ENCODE measurements at regions of chr15 and their contacts with region 1.

Region 1: DNA sequence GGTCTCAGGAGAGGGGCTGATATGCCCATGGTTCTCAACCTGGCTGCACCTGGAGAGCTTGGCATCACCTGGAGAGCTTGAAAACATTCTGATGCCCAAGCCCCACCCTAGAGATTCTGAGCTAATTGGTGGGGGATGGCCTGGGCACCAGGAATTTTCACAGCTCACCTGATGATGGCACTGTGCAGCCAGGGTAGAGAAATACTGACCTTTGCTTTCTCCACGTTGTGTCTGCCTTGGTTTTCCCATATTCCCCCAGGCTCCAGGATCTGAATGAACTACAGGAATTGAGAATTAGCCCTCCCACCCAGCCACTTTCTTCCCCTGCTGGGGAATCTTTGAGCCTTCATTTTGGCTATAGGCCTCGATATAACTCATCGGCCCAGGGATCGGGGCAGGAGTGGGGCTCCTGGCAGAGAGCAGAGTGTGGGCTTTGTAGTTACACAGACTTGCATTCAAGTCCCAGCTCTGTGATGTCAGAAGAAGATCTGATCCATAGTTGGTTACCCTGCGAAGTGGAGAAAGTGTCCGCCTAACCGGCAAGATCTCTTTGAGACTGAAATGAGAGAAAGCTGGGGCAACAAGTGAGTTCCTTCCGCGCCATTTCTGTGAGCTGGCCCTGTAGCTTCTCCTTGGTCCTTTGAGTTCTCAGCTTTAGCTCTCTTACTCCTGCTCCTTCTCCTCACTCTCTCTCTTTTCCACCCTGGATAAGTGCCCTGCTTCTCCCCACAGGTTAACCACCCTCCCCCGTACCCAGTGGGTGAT is 33.1 kb upstream of the UBE2Q2 start:
- DNase-seq: peak in 2 of 4 experiments; percentile 50 to 59
- ATAC-seq: peak; percentile 85
- H3K4me3 ChIP-seq: no peak overlapping the region
- H3K27ac ChIP-seq: no peak overlapping the region
- H3K4me1 ChIP-seq: peaks cover 0 to 3% of the 10 kb centered on the region in 2 experiments; a peak in 2 of 5 replicates
- H3K27me3 ChIP-seq: no peaks in the 10 kb centered on the region
- CTCF ChIP-seq: peak; percentile 59 to 78 (median 68)
- EP300 ChIP-seq: no peak
- POLR2A ChIP-seq: no peak
- RAD21 ChIP-seq: peak; percentile 64 to 84

Region 2: DNA sequence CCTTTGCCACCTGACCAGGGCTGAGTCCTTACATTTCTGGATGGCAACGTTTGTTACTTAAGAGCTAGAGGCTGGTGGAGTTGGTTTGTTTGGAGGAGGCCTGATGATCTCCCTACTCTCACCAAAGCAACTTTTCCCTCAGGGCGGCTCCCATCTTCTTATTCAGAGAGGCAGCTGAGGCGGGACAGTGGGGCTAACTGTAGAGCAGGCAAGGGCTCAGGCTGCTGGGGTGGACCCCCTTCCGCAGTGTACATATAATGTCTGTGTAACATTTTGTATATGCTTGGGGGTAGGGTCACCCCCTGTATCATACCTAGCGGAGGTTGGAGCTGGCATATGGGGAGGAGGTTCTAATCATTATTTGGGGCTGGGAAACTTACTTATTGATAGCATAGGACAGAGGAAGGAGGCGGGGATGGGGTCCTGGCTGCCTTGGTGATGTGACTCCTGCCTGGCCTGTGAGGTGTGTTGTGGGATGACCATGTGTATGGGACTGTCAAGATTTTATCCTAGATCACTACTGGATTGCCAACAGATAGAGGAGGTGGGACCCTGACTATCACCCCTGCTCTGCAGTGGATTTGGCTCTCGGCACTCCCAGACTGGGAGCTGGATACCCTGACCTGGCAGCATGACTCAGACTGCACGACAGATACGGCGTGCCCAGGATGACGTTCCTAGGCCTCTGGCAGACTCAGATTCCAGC is 19.4 kb before region 1 on chr15:
- CTCF ChIA-PET with region 1: no interaction called
- POLR2A ChIA-PET with region 1: no interaction called
- in situ Hi-C with region 1: no loop called
- intact Hi-C with region 1: no loop called
- DNase-seq: no peak
- ATAC-seq: no peak
- H3K4me3 ChIP-seq: no peak overlapping the region
- H3K27ac ChIP-seq: no peak overlapping the region
- H3K4me1 ChIP-seq: peaks cover 0 to 12% of the 10 kb centered on the region in 2 experiments; a peak in 2 of 5 replicates
- H3K27me3 ChIP-seq: peaks cover 14 to 38% of the 10 kb centered on the region in 2 experiments
- CTCF ChIP-seq: no peak
- EP300 ChIP-seq: no peak
- POLR2A ChIP-seq: no peak
- RAD21 ChIP-seq: no peak

Region 3: GRCh38 chr15:75903331-75904239 is 93.4 kb after region 1 on chr15 and contains the start of gene FBXO22:
- CTCF ChIA-PET with region 1: no interaction called
- POLR2A ChIA-PET with region 1: interaction called, 3 read pairs
- in situ Hi-C with region 1: no loop called
- intact Hi-C with region 1: loop called (anchors 5 kb)
- DNase-seq: peak; percentile 85 to 96 (median 86)
- ATAC-seq: peak; percentile 95
- H3K4me3 ChIP-seq: peak within 1 kb of the TSS; percentile 89
- H3K27ac ChIP-seq: peak within 1 kb of the TSS; percentile 91
- H3K4me1 ChIP-seq: peaks cover 19 to 32% of the 10 kb centered on the region in 2 experiments
- H3K27me3 ChIP-seq: no peaks in the 10 kb centered on the region
- CTCF ChIP-seq: no peak; a peak in 1 of 6 replicates
- EP300 ChIP-seq: no peak
- POLR2A ChIP-seq: peak; percentile 92
- RAD21 ChIP-seq: no peak
- polyA plus RNA-seq, gene FBXO22: 24.4 to 31.0 TPM

Region 4: DNA sequence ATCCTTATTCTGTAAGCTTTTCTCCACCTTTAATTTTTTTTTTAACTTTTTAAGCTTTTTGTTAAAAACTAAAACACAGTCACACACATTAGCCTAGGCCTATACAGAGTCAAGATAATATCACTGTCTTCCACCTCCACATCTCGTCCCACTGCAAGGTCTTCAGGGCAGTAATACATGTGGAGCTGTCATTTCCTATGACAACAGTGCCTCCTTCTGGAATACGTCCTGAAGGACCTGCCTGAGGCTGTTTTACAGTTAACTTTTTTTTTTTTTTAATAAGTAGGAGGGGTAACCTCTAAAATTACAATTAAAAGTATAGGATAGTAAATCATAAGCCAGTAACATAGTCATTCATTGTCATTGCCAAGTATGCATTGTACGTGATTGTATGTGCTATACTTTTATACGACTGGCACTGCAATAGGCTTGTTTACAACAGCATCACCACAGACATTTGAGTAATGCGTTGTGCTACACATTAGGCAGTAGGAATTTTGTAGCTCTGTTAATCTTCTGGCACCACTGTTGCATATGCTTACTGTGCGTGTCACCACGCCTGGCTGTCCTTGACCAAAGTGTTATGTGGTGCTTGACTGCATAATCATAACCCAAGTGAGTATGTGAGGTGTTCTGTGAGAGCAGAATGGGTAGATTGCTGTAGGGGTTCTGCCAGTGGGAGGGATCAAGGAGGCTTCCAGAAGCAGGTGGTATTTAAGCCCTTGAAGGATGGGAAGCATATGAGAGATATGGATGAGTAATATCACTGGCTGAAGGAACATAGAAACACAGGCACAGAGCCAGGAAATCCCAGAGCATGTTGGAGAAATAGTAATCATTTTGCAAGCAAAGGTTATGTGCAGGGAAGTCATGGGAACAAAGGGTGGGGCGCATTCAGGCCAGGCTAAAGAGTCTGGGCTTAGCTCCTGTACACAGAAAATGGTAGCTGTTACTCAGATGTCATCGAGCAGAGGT is 111.8 kb after region 1 on chr15:
- CTCF ChIA-PET with region 1: interaction called, 15 read pairs
- POLR2A ChIA-PET with region 1: no interaction called
- in situ Hi-C with region 1: loop called (anchors 5 kb)
- intact Hi-C with region 1: loop called (anchors 1 kb)
- DNase-seq: peak in 2 of 4 experiments; percentile 38 to 84
- ATAC-seq: peak; percentile 99
- H3K4me3 ChIP-seq: no peak overlapping the region
- H3K27ac ChIP-seq: no peak overlapping the region
- H3K4me1 ChIP-seq: no peaks in the 10 kb centered on the region
- H3K27me3 ChIP-seq: no peaks in the 10 kb centered on the region
- CTCF ChIP-seq: peak; percentile 71 to 86 (median 72)
- EP300 ChIP-seq: no peak
- POLR2A ChIP-seq: no peak
- RAD21 ChIP-seq: peak; percentile 86 to 94

Region 5: GRCh38 chr15:75928680-75929608 is 118.8 kb after region 1 on chr15:
- CTCF ChIA-PET with region 1: interaction called, 4 read pairs
- POLR2A ChIA-PET with region 1: no interaction called
- in situ Hi-C with region 1: loop called (anchors 5 kb)
- intact Hi-C with region 1: loop called (anchors 1 kb)
- DNase-seq: peak; percentile 28 to 70 (median 38)
- ATAC-seq: peak; percentile 95
- H3K4me3 ChIP-seq: no peak overlapping the region
- H3K27ac ChIP-seq: no peak overlapping the region
- H3K4me1 ChIP-seq: peaks cover 0 to 15% of the 10 kb centered on the region in 2 experiments; a peak in 2 of 5 replicates
- H3K27me3 ChIP-seq: no peaks in the 10 kb centered on the region
- CTCF ChIP-seq: peak; percentile 70 to 75 (median 73)
- EP300 ChIP-seq: no peak
- POLR2A ChIP-seq: no peak
- RAD21 ChIP-seq: peak; percentile 41 to 65

Region 6: GRCh38 chr15:76057332-76058000 is 247.3 kb after region 1 on chr15:
- CTCF ChIA-PET with region 1: interaction called, 6 read pairs
- POLR2A ChIA-PET with region 1: no interaction called
- in situ Hi-C with region 1: no loop called
- intact Hi-C with region 1: loop called (anchors 10 kb)
- DNase-seq: peak; percentile 33 to 62 (median 48)
- ATAC-seq: no peak
- H3K4me3 ChIP-seq: no peak overlapping the region
- H3K27ac ChIP-seq: no peak overlapping the region
- H3K4me1 ChIP-seq: peaks cover 0 to 10% of the 10 kb centered on the region in 2 experiments; a peak in 3 of 5 replicates
- H3K27me3 ChIP-seq: peaks cover 37% of the 10 kb centered on the region in 2 experiments
- CTCF ChIP-seq: peak; percentile 62 to 74 (median 63)
- EP300 ChIP-seq: no peak
- POLR2A ChIP-seq: no peak
- RAD21 ChIP-seq: peak; percentile 36 to 65

Region 7: DNA sequence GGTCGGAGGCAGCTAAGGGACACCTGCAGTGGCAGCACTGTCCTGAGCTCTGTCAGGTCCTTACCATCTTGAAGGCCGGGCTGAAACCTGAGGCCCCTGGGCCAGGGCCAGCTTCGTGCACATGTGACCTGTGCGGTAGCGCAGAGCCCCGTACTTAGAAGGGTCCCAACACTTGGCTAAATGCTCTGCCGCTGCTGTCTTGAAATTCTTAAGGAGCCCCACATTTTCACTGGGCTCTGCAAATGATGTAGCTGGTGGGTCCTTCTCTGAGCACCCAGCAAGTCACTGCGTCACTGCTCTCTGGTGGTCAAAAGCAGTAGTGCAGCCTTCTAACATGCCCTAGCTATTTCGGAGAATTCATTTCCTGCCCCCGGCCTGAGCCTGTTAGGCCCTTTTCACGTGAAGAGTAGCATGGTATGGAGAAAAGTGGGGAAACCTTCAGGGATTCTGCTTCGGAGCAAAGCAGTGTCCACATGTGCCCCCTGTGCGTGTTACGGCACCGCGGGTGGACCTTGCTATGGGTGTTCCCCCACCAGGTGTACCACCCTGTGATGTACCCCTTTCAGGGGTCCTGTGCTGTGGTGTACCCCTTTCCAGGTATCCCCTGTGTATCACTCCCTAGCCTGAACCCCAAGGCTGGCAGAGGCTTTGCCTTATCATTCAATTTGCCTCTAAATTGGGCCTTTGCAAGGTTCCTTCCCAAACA is 329.4 kb after region 1 on chr15:
- CTCF ChIA-PET with region 1: interaction called, 9 read pairs
- POLR2A ChIA-PET with region 1: no interaction called
- in situ Hi-C with region 1: loop called (anchors 10 kb)
- intact Hi-C with region 1: loop called (anchors 2 kb)
- DNase-seq: peak; percentile 78 to 82 (median 82)
- ATAC-seq: peak; percentile 95
- H3K4me3 ChIP-seq: no peak overlapping the region
- H3K27ac ChIP-seq: no peak overlapping the region
- H3K4me1 ChIP-seq: no peaks in the 10 kb centered on the region; a peak in 1 of 5 replicates
- H3K27me3 ChIP-seq: peaks cover 33 to 77% of the 10 kb centered on the region in 2 experiments
- CTCF ChIP-seq: peak; percentile 90 to 92 (median 90)
- EP300 ChIP-seq: no peak
- POLR2A ChIP-seq: no peak
- RAD21 ChIP-seq: peak; percentile 57 to 89